Lower leg skin (tissue), 4 donors: ENCODE measurements at regions of chr13 and their contacts with region 1.

Region 1: DNA sequence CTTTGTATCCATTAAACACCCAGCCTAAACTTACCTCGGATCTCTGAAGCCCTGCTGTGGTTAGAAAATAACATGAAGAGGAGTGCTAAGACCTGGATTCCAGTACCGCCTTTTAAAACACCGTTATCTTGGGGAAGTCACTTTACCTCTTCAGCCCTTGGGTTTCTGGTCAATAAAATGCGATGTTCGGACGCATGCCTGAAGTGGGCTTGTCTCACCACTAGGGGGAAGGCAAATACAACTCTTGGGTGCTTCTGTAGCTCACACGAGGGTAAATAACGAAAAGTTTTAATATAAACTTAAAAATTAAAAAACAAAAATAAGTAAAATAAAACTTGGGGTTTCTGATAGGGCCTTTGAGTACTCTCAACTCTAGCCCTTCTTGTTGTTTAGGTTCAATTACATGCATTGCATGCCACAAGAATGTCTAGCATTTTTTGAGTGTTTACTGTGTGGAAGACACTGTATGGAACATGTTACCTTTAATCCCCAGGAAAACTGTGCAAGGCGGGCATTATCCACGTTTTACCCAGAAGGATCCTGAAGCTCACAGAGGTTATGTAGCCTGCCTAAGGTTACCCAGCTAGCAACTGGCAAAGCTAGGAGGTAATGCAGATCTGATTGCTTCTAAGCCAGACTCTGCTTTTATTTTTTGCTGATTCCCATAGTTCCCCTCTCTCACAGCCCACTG is 240.4 kb downstream of the LMO7 start:
- DNase-seq: peak in 1 of 2 donors; percentile 56
- H3K4me3 ChIP-seq: no peak overlapping the region
- CTCF ChIP-seq: peak in 1 of 3 donors; percentile 34
- POLR2A ChIP-seq: no peak

Region 2: GRCh38 chr13:74062933-74063332 is 1813.6 kb before region 1 on chr13:
- intact Hi-C with region 1: no loop called
- DNase-seq: no peak
- H3K4me3 ChIP-seq: no peak overlapping the region
- CTCF ChIP-seq: no peak
- POLR2A ChIP-seq: no peak

Region 3: GRCh38 chr13:75927183-75927669 is 50.7 kb after region 1 on chr13:
- intact Hi-C with region 1: no loop called
- DNase-seq: no peak
- H3K4me3 ChIP-seq: no peak overlapping the region
- CTCF ChIP-seq: no peak
- POLR2A ChIP-seq: no peak

Region 4: DNA sequence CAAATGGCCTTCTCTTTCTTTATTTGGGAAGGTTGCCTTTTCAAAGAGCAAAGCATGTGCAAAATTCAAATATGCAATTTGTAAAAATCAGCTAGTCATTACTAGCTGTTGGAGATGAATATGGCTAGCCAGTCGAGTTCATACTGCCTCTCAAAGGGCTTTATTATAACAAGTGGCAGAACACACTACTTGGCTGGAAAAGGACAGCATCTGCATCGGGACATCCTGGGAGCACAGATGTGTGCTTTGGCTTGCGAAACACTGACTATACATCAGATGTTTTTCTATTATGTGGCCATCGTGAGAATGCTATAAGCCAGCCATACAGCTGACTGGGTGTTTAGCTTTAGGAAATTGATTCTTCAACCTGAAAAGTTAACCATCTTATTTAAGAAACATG is 585.5 kb after region 1 on chr13:
- intact Hi-C with region 1: loop called (anchors 5 kb)
- DNase-seq: no peak
- H3K4me3 ChIP-seq: no peak overlapping the region
- CTCF ChIP-seq: no peak
- POLR2A ChIP-seq: no peak

Region 5: GRCh38 chr13:76917095-76917494 is 1040.6 kb after region 1 on chr13:
- intact Hi-C with region 1: loop called (anchors 10 kb)
- DNase-seq: no peak
- H3K4me3 ChIP-seq: no peak overlapping the region
- CTCF ChIP-seq: no peak
- POLR2A ChIP-seq: no peak